ENCODE measurements at regions of chr14 and their contacts with region 1.

Region 1: DNA sequence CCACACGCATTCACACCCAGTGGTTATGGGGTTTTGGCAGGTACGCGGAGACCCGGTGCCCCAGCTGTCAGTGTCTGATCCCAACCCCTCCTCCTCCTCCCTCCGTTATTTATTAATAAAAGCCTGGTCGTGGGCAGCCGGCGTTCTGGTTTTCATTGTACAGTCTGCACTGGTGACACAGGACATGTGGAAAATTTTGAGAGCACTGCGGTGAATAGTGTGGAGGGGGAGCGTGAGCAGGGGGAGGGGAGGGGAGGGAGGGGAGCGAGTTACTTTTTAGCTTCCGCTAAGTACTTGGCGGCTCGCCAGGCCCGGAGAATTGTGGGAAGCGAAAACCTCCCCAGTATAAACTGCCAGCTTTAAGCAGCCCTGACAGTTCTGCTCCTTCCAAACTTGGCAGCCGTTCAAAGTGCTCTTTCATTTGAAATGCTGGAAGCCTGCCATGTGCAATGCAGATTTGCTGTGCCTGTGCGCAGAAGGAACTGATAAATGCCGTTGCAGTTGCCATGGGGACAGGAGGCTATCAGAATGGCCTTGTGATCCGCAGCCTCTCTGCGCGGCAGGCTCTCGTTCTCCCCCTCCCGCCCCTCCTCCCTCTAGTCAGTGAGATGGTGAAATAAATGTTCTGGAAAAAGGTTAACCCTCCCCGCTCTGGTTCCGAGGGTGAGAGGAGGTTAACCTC is 11.7 kb upstream of the IRF2BPL start:
- DNase-seq: peak; percentile 97
- H3K4me3 Mint-ChIP-seq: peak overlapping the region; percentile 77
- H3K27ac Mint-ChIP-seq: peak overlapping the region; percentile 90
- H3K4me1 Mint-ChIP-seq: peaks cover 76% of the 10 kb centered on the region
- H3K27me3 Mint-ChIP-seq: no peaks in the 10 kb centered on the region

Region 2: GRCh38 chr14:76956316-76957090 is 83.7 kb before region 1 on chr14:
- intact Hi-C with region 1: loop called (anchors 1 kb)
- DNase-seq: peak; percentile 96
- H3K4me3 Mint-ChIP-seq: peak overlapping the region; percentile 82
- H3K27ac Mint-ChIP-seq: peak overlapping the region; percentile 97
- H3K4me1 Mint-ChIP-seq: peaks cover 71% of the 10 kb centered on the region
- H3K27me3 Mint-ChIP-seq: no peaks in the 10 kb centered on the region

Region 3: GRCh38 chr14:76977793-76978720 is 62.1 kb before region 1 on chr14:
- intact Hi-C with region 1: loop called (anchors 1 kb)
- DNase-seq: peak; percentile 95
- H3K4me3 Mint-ChIP-seq: peak overlapping the region; percentile 69
- H3K27ac Mint-ChIP-seq: peak overlapping the region; percentile 92
- H3K4me1 Mint-ChIP-seq: peaks cover 28% of the 10 kb centered on the region
- H3K27me3 Mint-ChIP-seq: peaks cover 2% of the 10 kb centered on the region

Region 4: DNA sequence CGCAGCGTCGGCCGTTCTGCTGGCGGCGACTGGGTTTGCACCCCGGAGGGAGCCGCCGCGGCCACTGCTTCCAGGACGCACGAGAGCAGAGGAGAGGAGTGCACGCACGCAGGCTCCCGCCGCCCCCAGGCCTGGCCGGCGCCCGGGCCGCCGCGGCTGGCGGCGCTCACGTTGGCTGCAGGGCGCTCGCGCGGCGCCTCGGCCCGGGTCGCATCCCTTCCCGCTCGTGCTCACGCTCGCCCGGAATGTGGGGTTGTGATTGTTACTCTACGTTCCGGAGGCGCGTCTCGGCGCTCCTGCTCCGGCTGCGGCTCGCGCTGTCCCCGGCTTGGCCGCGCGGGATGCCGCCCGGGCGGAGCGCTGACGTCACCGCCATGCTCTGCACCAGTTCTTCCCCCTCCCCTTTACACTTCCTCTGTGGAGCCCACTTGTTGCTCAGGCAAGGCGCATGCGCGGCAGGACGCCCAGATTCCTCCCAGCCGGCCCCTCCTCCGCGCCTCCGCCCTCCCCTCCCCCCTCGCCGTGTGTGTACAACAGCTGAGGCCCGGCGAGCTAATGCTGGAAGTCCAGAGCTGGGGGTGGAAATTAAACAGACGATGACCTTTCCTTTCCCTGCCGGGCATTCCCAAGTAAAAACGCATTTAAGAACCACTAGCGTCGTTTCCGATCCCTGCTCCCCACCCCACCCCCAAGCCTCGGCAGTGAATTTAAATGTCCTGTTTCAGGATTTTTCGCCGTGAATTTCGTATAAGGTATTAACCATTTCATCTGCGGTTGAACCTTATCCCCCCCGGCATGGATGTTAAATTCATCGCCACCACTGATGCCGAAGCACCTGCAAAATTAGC is 11.6 kb before region 1 on chr14 and contains the start of gene IRF2BPL:
- intact Hi-C with region 1: loop called (anchors 1 kb)
- DNase-seq: peak; percentile 98
- H3K4me3 Mint-ChIP-seq: peak within 1 kb of the TSS; percentile 99
- H3K27ac Mint-ChIP-seq: peak within 1 kb of the TSS; percentile 98
- H3K4me1 Mint-ChIP-seq: peaks cover 46% of the 10 kb centered on the region
- H3K27me3 Mint-ChIP-seq: no peaks in the 10 kb centered on the region
- total RNA-seq, gene IRF2BPL: 32.8 and 34.8 TPM in 2 replicates

Region 5: GRCh38 chr14:77086017-77086736 is 46.0 kb after region 1 on chr14:
- intact Hi-C with region 1: no loop called
- DNase-seq: peak; percentile 65
- H3K4me3 Mint-ChIP-seq: no peak overlapping the region
- H3K27ac Mint-ChIP-seq: peak overlapping the region; percentile 48
- H3K4me1 Mint-ChIP-seq: peaks cover 5% of the 10 kb centered on the region
- H3K27me3 Mint-ChIP-seq: peaks cover 9% of the 10 kb centered on the region

Measured in activated CD4-positive, alpha-beta T cell treated with anti-CD3 and anti-CD28 coated beads, Interleukin-2, amount 10 ng/mL, durations not matched to agents 24 days and 14 days (primary cell).